ENCODE measurements at regions of chr14 and their contacts with region 1.

Region 1: DNA sequence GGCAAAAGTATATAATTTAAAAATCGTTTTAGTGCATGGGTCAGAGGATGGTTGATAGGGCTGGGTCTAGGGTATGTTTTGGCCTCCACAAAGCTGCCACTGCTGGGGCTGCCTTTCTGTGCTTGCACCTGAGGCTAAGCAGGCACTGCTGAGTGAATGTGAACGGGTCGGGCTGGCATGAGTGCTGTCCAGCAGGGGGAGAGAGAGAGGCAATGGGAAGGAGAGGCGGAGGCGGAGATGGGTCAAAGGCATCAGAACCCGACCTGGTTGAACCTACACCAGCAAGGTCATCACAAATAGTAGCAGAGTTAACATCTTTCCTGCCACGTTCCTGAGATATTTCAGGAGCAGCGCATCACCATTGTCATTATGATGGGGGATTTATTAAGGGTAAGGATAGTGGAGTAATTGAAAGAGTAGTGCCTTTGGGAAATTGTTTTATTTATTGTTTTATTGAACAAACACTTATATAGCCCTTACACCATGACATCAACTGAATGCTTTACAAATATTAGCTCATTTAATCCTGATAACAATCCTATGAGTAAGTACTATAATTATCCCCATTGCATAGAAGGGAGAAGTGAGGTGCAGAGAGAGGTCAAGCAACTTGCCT is 5.8 kb upstream of the NRXN3 start:
- DNase-seq: no peak
- ATAC-seq: peak; percentile 85
- H3K4me3 ChIP-seq: no peak overlapping the region
- H3K27ac ChIP-seq: no peak overlapping the region
- H3K4me1 ChIP-seq: no peaks in the 10 kb centered on the region
- H3K27me3 ChIP-seq: peaks cover 2 to 3% of the 10 kb centered on the region in 2 experiments; a peak in 2 of 4 replicates
- CTCF ChIP-seq: peak; percentile 45 to 79 (median 71)
- EP300 ChIP-seq: no peak
- POLR2A ChIP-seq: no peak
- RAD21 ChIP-seq: peak; percentile 44

Region 2: GRCh38 chr14:78836777-78837176 is 672.4 kb after region 1 on chr14:
- CTCF ChIA-PET with region 1: no interaction called
- POLR2A ChIA-PET with region 1: no interaction called
- RAD21 ChIA-PET with region 1: no interaction called
- SMC1A ChIA-PET with region 1: no interaction called
- in situ Hi-C with region 1: no loop called
- intact Hi-C with region 1: loop called (anchors 10 kb)
- DNase-seq: peak; percentile 17
- ATAC-seq: peak; percentile 91
- H3K4me3 ChIP-seq: no peak overlapping the region
- H3K27ac ChIP-seq: no peak overlapping the region
- H3K4me1 ChIP-seq: no peaks in the 10 kb centered on the region
- H3K27me3 ChIP-seq: no peaks in the 10 kb centered on the region
- CTCF ChIP-seq: peak; percentile 51 to 67 (median 63)
- EP300 ChIP-seq: no peak
- POLR2A ChIP-seq: no peak
- RAD21 ChIP-seq: peak; percentile 73

Measured in GM12878 (cell line).